HEK293 (cell line): ENCODE measurements at regions of chr17 and their contacts with region 1.

Region 1: DNA sequence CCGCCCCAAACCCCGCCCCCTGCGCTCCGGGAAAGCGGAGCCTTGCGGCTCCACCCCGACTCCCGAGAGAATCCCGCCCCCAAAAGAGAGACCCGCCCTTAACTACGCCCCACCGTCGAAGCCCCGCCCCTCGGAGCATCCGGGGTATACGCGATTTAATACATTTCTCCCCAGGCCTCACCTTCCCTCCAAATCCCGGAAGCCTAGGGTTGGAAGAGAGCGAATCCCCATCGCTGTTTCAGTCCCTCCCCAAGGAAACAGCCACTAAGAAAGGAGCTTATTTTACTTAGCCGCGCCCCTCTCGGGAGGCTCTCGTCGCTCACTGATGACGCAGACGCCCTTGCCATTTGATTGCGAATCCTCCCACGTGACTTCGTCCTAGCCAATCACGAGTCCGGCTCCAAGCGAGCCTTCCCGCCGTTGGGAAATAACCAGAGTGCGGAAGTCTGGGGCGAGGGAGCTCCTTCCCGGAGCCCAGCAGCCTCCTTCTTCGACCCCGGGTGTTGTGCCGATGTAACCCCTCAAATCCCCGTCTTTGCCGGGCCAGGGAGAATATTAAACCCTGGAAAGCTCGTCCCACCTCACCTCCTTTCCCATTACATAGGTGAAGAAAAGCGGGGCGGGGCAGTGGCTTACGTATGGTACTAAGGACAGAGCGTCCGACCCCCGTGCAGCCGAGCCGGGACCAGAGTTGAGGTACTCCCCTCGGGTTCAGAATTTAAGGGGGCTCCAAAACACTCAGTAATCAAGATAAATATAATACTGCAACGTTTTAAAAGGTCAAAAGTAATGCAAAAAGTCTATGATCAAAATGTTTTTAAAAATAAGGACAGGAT is 462 bp upstream of the FDXR start:
- H3K4me3 ChIP-seq: peak overlapping the region; percentile 83
- H3K27ac ChIP-seq: peak overlapping the region; percentile 62; the same call in 1 of the 2 replicates
- H3K4me1 ChIP-seq: peaks cover 10% of the 10 kb centered on the region
- CTCF ChIP-seq: no peak

Region 2: GRCh38 chr17:74541176-74542111 is 331.8 kb before region 1 on chr17:
- CTCF ChIA-PET with region 1: no interaction called
- POLR2A ChIA-PET with region 1: no interaction called
- H3K4me3 ChIP-seq: no peak overlapping the region
- H3K27ac ChIP-seq: no peak overlapping the region
- H3K4me1 ChIP-seq: no peaks in the 10 kb centered on the region
- CTCF ChIP-seq: no peak

Region 3: GRCh38 chr17:74776044-74776977 is 96.9 kb before region 1 on chr17 and contains the start of gene NAT9:
- CTCF ChIA-PET with region 1: no interaction called
- POLR2A ChIA-PET with region 1: interaction called, 49 read pairs
- H3K4me3 ChIP-seq: peak within 1 kb of the TSS; percentile 84
- H3K27ac ChIP-seq: peak within 1 kb of the TSS; percentile 50
- H3K4me1 ChIP-seq: peaks cover 3% of the 10 kb centered on the region; the same call in 1 of the 2 replicates
- CTCF ChIP-seq: no peak

Region 4: GRCh38 chr17:74852237-74853047 is 20.8 kb before region 1 on chr17:
- CTCF ChIA-PET with region 1: interaction called, 239 read pairs
- POLR2A ChIA-PET with region 1: interaction called, 47 read pairs
- H3K4me3 ChIP-seq: peak overlapping the region; percentile 28
- H3K27ac ChIP-seq: no peak overlapping the region
- H3K4me1 ChIP-seq: peaks cover 5% of the 10 kb centered on the region; the same call in 1 of the 2 replicates
- CTCF ChIP-seq: no peak

Region 5: GRCh38 chr17:74893936-74894671 is 20.8 kb after region 1 on chr17:
- CTCF ChIA-PET with region 1: interaction called, 3 read pairs
- POLR2A ChIA-PET with region 1: interaction called, 16 read pairs
- H3K4me3 ChIP-seq: no peak overlapping the region
- H3K27ac ChIP-seq: no peak overlapping the region
- H3K4me1 ChIP-seq: no peaks in the 10 kb centered on the region
- CTCF ChIP-seq: no peak

Region 6: GRCh38 chr17:74987418-74987908 is 114.2 kb after region 1 on chr17 and contains the start of gene CDR2L:
- CTCF ChIA-PET with region 1: interaction called, 3 read pairs
- POLR2A ChIA-PET with region 1: interaction called, 10 read pairs
- H3K4me3 ChIP-seq: peak within 1 kb of the TSS; percentile 81
- H3K27ac ChIP-seq: peak within 1 kb of the TSS; percentile 88; the same call in 1 of the 2 replicates
- H3K4me1 ChIP-seq: peaks cover 3% of the 10 kb centered on the region; the same call in 1 of the 2 replicates
- CTCF ChIP-seq: no peak

Region 7: GRCh38 chr17:75289115-75289831 is 416.0 kb after region 1 on chr17 and contains the start of gene SLC25A19:
- CTCF ChIA-PET with region 1: no interaction called
- POLR2A ChIA-PET with region 1: interaction called, 12 read pairs
- H3K4me3 ChIP-seq: peak within 1 kb of the TSS; percentile 79
- H3K27ac ChIP-seq: peak within 1 kb of the TSS; percentile 79
- H3K4me1 ChIP-seq: peaks cover 4% of the 10 kb centered on the region; the same call in 1 of the 2 replicates
- CTCF ChIP-seq: peak; percentile 90